Activated B cell treated with CpG ODN at 0.5 μM for 24 hours (primary cell): ENCODE measurements at regions of chr10 and their contacts with region 1.

Region 1: GRCh38 chr10:22436884-22437619 is 91.8 kb downstream of the SPAG6 start:
- DNase-seq: peak; percentile 88
- ATAC-seq: peak; percentile 88
- H3K4me3 Mint-ChIP-seq: peak overlapping the region; percentile 94
- H3K27ac Mint-ChIP-seq: peak overlapping the region; percentile 96
- H3K4me1 Mint-ChIP-seq: peaks cover 36% of the 10 kb centered on the region
- H3K27me3 Mint-ChIP-seq: no peaks in the 10 kb centered on the region
- CTCF ChIP-seq: no peak

Region 2: DNA sequence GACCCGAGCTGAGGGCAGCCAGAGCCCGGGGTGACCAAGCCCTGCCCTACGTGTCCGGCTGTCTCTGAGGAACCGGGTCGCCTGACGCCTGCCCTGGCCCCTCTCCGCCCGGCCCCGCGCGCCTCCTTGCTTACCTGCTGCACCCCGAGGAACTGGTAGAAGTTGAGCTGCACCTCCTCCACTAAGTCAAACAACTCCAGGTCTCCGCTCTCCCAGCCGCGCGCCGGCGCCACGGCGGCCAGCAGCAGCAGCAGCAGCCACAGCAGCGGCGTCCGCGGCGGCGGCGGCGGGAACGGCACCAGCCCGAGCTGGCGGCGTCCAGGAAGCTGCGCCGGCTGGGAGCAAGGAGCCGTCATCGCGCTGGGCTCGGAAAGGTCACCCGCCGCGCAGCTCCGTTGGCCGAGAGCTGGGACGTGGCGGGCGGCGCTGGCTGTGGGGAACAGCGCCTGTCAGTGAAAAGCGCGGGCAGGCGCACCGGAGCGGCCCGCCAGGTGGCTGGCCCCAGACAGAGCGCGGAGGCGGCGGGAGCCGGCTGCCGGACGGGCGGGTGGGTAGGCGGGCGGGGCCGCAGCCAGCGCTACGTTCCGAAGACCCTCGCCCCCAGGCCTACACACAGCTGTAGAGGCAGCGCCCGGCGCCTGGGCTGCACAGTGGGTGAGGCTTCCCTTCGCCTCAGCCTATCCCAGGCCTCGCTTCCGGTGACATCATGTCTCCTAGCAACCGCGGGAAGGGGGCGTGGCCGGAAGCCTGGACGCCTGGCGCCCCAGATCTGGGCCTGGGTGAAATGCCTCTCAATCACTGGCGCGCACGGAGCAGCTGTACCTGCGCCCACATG is 433.8 kb before region 1 on chr10 and contains the start of gene DNAJC1:
- CTCF ChIA-PET with region 1: interaction called, 3 read pairs
- POLR2A ChIA-PET with region 1: interaction called, 65 read pairs
- intact Hi-C with region 1: loop called (anchors 1 kb)
- DNase-seq: peak; percentile 98
- ATAC-seq: peak; percentile 92
- H3K4me3 Mint-ChIP-seq: peak within 1 kb of the TSS; percentile 87
- H3K27ac Mint-ChIP-seq: peak within 1 kb of the TSS; percentile 91
- H3K4me1 Mint-ChIP-seq: peaks cover 41% of the 10 kb centered on the region
- H3K27me3 Mint-ChIP-seq: no peaks in the 10 kb centered on the region
- CTCF ChIP-seq: no peak
- total RNA-seq, gene DNAJC1: 9.2 and 10.9 TPM in 2 replicates

Region 3: DNA sequence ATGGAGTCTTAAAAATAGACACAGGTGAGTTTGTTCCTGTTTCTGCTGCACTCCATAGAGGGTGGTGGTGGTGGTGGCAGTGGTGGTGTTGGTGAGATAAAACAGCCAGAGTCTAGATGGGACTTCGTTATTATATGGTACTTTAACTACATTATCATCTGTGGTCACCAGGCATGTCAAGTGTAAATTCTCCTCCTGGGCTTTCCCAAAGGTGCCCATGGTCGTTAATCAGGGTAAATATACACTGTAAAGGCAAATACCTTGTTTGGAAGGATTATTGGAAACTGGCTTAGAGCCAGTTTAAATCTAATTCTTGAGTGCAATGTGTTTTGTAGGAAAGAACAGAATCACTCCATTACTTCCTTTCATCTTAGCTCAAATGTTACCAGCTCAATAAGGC is 142.4 kb before region 1 on chr10:
- CTCF ChIA-PET with region 1: no interaction called
- POLR2A ChIA-PET with region 1: no interaction called
- intact Hi-C with region 1: no loop called
- DNase-seq: no peak
- ATAC-seq: no peak
- H3K4me3 Mint-ChIP-seq: no peak overlapping the region
- H3K27ac Mint-ChIP-seq: no peak overlapping the region
- H3K4me1 Mint-ChIP-seq: no peaks in the 10 kb centered on the region
- H3K27me3 Mint-ChIP-seq: peaks cover 12% of the 10 kb centered on the region
- CTCF ChIP-seq: no peak

Region 4: GRCh38 chr10:22325272-22326144 is 111.5 kb before region 1 on chr10:
- CTCF ChIA-PET with region 1: no interaction called
- POLR2A ChIA-PET with region 1: interaction called, 38 read pairs
- intact Hi-C with region 1: no loop called
- DNase-seq: peak; percentile 67
- ATAC-seq: peak; percentile 33
- H3K4me3 Mint-ChIP-seq: peak overlapping the region; percentile 90
- H3K27ac Mint-ChIP-seq: peak overlapping the region; percentile 89
- H3K4me1 Mint-ChIP-seq: peaks cover 41% of the 10 kb centered on the region
- H3K27me3 Mint-ChIP-seq: no peaks in the 10 kb centered on the region
- CTCF ChIP-seq: no peak

Region 5: DNA sequence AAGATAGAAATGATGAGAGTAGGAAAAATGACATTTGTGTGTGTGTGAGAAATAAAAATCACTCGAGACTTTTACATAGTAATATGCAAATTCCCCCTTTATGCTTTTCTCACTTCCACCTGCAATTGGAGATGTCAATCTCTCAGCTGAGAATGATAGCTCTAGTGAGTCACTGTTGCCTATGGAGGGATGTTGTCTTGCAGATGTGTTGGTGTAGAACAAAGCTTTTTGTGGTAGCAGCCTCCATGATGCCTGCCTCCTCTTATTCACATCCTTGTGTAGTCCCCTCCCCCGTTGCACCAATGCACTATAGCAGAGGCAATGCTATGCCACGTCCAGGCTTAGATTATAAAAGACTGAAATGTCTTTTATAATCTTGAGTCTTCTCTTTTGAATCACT is 58.0 kb before region 1 on chr10:
- CTCF ChIA-PET with region 1: no interaction called
- POLR2A ChIA-PET with region 1: interaction called, 10 read pairs
- intact Hi-C with region 1: no loop called
- DNase-seq: no peak
- ATAC-seq: peak; percentile 54
- H3K4me3 Mint-ChIP-seq: no peak overlapping the region
- H3K27ac Mint-ChIP-seq: no peak overlapping the region
- H3K4me1 Mint-ChIP-seq: peaks cover 22% of the 10 kb centered on the region
- H3K27me3 Mint-ChIP-seq: no peaks in the 10 kb centered on the region
- CTCF ChIP-seq: no peak

Region 6: GRCh38 chr10:22420787-22421517 is 16.1 kb before region 1 on chr10:
- CTCF ChIA-PET with region 1: no interaction called
- POLR2A ChIA-PET with region 1: no interaction called
- intact Hi-C with region 1: no loop called
- DNase-seq: no peak
- ATAC-seq: peak; percentile 42
- H3K4me3 Mint-ChIP-seq: no peak overlapping the region
- H3K27ac Mint-ChIP-seq: no peak overlapping the region
- H3K4me1 Mint-ChIP-seq: peaks cover 1% of the 10 kb centered on the region
- H3K27me3 Mint-ChIP-seq: no peaks in the 10 kb centered on the region
- CTCF ChIP-seq: no peak

Region 7: GRCh38 chr10:22550732-22551131 is 113.7 kb after region 1 on chr10:
- CTCF ChIA-PET with region 1: no interaction called
- POLR2A ChIA-PET with region 1: interaction called, 5 read pairs
- intact Hi-C with region 1: loop called (anchors 2 kb)
- DNase-seq: peak; percentile 50
- ATAC-seq: peak; percentile 64
- H3K4me3 Mint-ChIP-seq: no peak overlapping the region
- H3K27ac Mint-ChIP-seq: no peak overlapping the region
- H3K4me1 Mint-ChIP-seq: peaks cover 3% of the 10 kb centered on the region
- H3K27me3 Mint-ChIP-seq: no peaks in the 10 kb centered on the region
- CTCF ChIP-seq: no peak

Region 8: GRCh38 chr10:23448802-23449570 is 1011.9 kb after region 1 on chr10:
- CTCF ChIA-PET with region 1: no interaction called
- POLR2A ChIA-PET with region 1: no interaction called
- intact Hi-C with region 1: loop called (anchors 5 kb)
- DNase-seq: no peak
- ATAC-seq: peak; percentile 77
- H3K4me3 Mint-ChIP-seq: peak overlapping the region; percentile 77
- H3K27ac Mint-ChIP-seq: peak overlapping the region; percentile 93
- H3K4me1 Mint-ChIP-seq: peaks cover 78% of the 10 kb centered on the region
- H3K27me3 Mint-ChIP-seq: no peaks in the 10 kb centered on the region
- CTCF ChIP-seq: no peak